ENCODE measurements at regions of chr13 and their contacts with region 1.

Region 1: DNA sequence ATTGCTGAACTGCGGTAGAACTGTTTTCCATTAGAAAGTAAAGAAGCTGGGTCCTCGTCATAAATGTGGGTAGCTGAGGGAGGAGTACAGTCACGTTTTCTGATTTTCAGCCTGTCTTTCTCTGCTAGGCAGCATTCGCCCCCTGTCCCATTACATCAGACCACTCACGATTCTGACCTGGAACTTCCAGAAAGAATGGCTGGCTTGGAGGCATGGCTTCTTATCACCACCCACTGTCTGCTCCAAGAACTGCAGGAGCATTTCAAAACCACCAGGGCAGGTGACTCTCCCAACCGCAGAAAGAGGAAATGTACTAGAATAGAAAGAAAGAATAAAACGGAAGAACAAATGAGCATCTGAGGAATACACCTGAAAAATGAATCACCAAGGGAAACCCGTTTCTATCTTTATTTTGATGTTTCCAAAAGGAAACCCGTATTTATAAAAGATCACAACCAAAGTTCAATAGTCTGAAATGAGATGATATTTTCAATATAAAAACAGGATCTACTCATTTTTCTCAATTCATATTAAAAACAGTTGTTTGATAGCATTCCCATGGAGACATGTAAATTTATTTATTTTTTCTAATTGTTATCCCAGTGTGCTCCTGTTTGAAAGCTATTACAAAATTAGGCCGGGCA is 22.1 kb upstream of the POMP start:
- DNase-seq: peak; percentile 85
- H3K4me3 Mint-ChIP-seq: peak overlapping the region; percentile 48
- H3K27ac Mint-ChIP-seq: peak overlapping the region; percentile 1
- H3K4me1 Mint-ChIP-seq: peaks cover 12% of the 10 kb centered on the region
- H3K27me3 Mint-ChIP-seq: peaks cover 25% of the 10 kb centered on the region

Region 2: GRCh38 chr13:28324181-28324789 is 312.5 kb before region 1 on chr13:
- intact Hi-C with region 1: loop called (anchors 1 kb)
- DNase-seq: peak; percentile 89
- H3K4me3 Mint-ChIP-seq: no peak overlapping the region
- H3K27ac Mint-ChIP-seq: no peak overlapping the region
- H3K4me1 Mint-ChIP-seq: peaks cover 4% of the 10 kb centered on the region
- H3K27me3 Mint-ChIP-seq: no peaks in the 10 kb centered on the region

Region 3: GRCh38 chr13:28494776-28495537 is 141.8 kb before region 1 on chr13 and contains the start of gene FLT1:
- intact Hi-C with region 1: loop called (anchors 1 kb)
- DNase-seq: peak; percentile 84
- H3K4me3 Mint-ChIP-seq: peak within 1 kb of the TSS; percentile 85
- H3K27ac Mint-ChIP-seq: peak within 1 kb of the TSS; percentile 72
- H3K4me1 Mint-ChIP-seq: peaks cover 21% of the 10 kb centered on the region
- H3K27me3 Mint-ChIP-seq: peaks cover 36% of the 10 kb centered on the region
- total RNA-seq, gene FLT1: 46.3 and 46.7 TPM in 2 replicates

Region 4: GRCh38 chr13:28540612-28541011 is 96.2 kb before region 1 on chr13:
- intact Hi-C with region 1: loop called (anchors 5 kb)
- DNase-seq: no peak
- H3K4me3 Mint-ChIP-seq: peak overlapping the region; percentile 16
- H3K27ac Mint-ChIP-seq: peak overlapping the region; percentile 90
- H3K4me1 Mint-ChIP-seq: peaks cover 25% of the 10 kb centered on the region
- H3K27me3 Mint-ChIP-seq: no peaks in the 10 kb centered on the region

Region 5: DNA sequence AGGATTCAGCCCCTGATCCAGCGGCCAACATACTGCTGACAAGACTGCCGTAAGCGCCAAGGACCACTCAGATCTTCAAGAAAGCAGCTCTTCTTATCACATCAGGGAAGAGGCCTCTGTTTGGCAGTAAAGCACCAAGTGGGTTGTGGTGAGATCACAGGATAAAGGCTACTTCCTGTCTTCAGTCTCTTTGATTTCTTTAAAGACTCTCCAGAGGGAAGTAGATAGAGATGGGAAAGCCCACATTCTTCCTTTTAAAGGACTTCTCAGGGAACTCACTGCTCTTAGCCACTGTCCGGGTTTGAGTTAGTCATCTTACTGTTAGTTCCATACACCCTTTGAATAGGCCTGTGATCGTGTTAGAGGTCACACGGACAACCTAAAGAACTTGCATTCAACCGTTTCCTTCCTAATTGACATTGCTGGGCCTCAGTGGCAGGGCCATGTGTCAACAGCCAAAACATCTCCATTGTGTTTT is 25.1 kb before region 1 on chr13:
- intact Hi-C with region 1: loop called (anchors 2 kb)
- DNase-seq: peak; percentile 81
- H3K4me3 Mint-ChIP-seq: peak overlapping the region; percentile 53
- H3K27ac Mint-ChIP-seq: peak overlapping the region; percentile 68
- H3K4me1 Mint-ChIP-seq: peaks cover 28% of the 10 kb centered on the region
- H3K27me3 Mint-ChIP-seq: no peaks in the 10 kb centered on the region